Gastrocnemius medialis (tissue), 4 donors: ENCODE measurements at regions of chr7 and their contacts with region 1.

Region 1: GRCh38 chr7:132004536-132005272 is 448.3 kb upstream of the PODXL start:
- DNase-seq: peak in 1 of 2 donors; percentile 37
- ATAC-seq: peak; percentile 45 to 78
- H3K4me3 ChIP-seq: no peak overlapping the region
- H3K27ac ChIP-seq: no peak overlapping the region
- H3K4me1 ChIP-seq: no peaks in the 10 kb centered on the region
- H3K27me3 ChIP-seq: no peaks in the 10 kb centered on the region
- CTCF ChIP-seq: peak in 4 of 5 experiments; percentile 17 to 38 (median 30)
- POLR2A ChIP-seq: no peak

Region 2: GRCh38 chr7:131890176-131890575 is 114.5 kb before region 1 on chr7:
- in situ Hi-C with region 1: no loop called
- intact Hi-C with region 1: no loop called
- DNase-seq: no peak
- ATAC-seq: no peak
- H3K4me3 ChIP-seq: no peak overlapping the region
- H3K27ac ChIP-seq: no peak overlapping the region
- H3K4me1 ChIP-seq: no peaks in the 10 kb centered on the region
- H3K27me3 ChIP-seq: no peaks in the 10 kb centered on the region
- CTCF ChIP-seq: no peak
- POLR2A ChIP-seq: no peak

Region 3: DNA sequence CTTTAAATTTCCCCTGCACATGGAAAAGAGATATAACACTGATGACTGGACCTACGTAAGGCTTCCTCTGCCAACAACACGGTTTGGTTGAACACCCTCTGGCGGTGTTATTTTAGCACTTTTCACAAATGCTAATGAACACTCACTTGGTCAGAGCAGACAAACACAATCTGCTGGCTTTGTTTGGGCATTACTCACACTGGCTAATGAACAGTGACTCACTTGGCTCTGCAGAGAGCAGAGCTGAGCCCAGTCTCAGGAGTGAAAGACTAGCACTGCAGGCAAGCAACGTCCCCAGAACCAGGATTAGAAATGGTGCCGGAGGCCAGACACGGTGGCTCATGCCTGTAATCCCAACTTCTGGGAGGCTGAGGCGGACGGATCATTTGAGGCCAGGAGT is 140.8 kb after region 1 on chr7:
- in situ Hi-C with region 1: no loop called
- intact Hi-C with region 1: loop called (anchors 10 kb)
- DNase-seq: peak in 1 of 2 donors; percentile 31
- ATAC-seq: peak; percentile 77 to 85
- H3K4me3 ChIP-seq: no peak overlapping the region
- H3K27ac ChIP-seq: no peak overlapping the region
- H3K4me1 ChIP-seq: peaks cover 3 to 4% of the 10 kb centered on the region in 2 donors
- H3K27me3 ChIP-seq: no peaks in the 10 kb centered on the region
- CTCF ChIP-seq: no peak
- POLR2A ChIP-seq: no peak